CD14-positive monocyte (primary cell): ENCODE measurements at regions of chr17 and their contacts with region 1.

Region 1: DNA sequence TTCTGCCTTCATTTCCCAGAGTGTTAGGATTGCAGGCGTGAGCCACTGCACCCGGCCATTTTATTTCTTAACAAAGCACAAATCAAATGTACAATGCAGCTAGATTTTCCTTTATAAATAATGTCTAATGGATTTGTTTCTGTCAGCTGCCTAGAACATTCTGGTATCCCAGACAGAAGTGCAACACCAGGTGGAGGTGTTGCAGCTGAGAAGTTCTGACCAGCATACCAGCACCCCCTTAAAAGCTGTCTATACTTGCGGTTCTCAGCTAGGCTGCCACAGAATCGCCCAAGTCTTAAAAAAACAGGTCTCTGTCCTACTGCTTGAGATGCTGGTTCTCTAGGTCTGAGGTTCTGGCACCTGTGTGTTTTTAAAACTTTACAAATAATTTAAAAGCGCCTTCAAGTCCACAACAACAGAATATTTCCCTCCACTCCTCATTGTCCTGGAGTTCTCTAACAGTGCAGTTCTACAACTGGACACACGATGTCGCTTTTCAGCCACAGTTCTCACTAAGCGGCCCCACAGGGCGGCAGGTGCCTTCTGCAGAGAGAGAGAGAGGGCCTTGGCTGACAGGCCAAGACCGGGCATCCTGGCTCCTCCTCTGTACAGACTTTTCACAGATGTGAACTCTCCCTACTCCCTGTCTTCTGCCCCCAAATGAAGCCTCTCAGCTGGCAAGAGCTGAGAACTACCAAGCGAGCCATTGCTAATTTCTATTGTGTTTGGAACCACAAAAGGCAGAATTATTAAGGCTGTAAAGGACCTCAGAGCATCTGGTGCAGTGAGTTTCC is 32.6 kb upstream of the MEOX1 start:
- DNase-seq: peak; percentile 60 to 80 (median 72)
- H3K4me3 ChIP-seq: no peak overlapping the region
- H3K4me3 Mint-ChIP-seq: no peak overlapping the region
- H3K27ac ChIP-seq: no peak overlapping the region
- H3K27ac Mint-ChIP-seq: no peak overlapping the region
- H3K4me1 ChIP-seq: peaks cover 3 to 11% of the 10 kb centered on the region in 2 donors
- H3K4me1 Mint-ChIP-seq: peaks cover 7% of the 10 kb centered on the region
- H3K27me3 ChIP-seq: peaks cover 0 to 10% of the 10 kb centered on the region in 2 donors
- H3K27me3 Mint-ChIP-seq: peaks cover 11 to 26% (median 13%) of the 10 kb centered on the region in 3 donors
- CTCF ChIP-seq: peak; percentile 96

Region 2: GRCh38 chr17:43734376-43734775 is 40.1 kb after region 1 on chr17:
- intact Hi-C with region 1: no loop called
- DNase-seq: no peak
- H3K4me3 ChIP-seq: no peak overlapping the region
- H3K4me3 Mint-ChIP-seq: no peak overlapping the region
- H3K27ac ChIP-seq: no peak overlapping the region
- H3K27ac Mint-ChIP-seq: no peak overlapping the region
- H3K4me1 ChIP-seq: no peaks in the 10 kb centered on the region
- H3K4me1 Mint-ChIP-seq: no peaks in the 10 kb centered on the region
- H3K27me3 ChIP-seq: peaks cover 0 to 2% of the 10 kb centered on the region in 2 donors
- H3K27me3 Mint-ChIP-seq: peaks cover 5 to 7% (median 6%) of the 10 kb centered on the region in 3 donors
- CTCF ChIP-seq: no peak

Region 3: GRCh38 chr17:43760254-43760852 is 66.1 kb after region 1 on chr17:
- intact Hi-C with region 1: loop called (anchors 1 to 2 kb)
- DNase-seq: peak; percentile 69 to 82 (median 78)
- H3K4me3 ChIP-seq: no peak overlapping the region
- H3K4me3 Mint-ChIP-seq: no peak overlapping the region
- H3K27ac ChIP-seq: no peak overlapping the region
- H3K27ac Mint-ChIP-seq: peak overlapping the region in 1 of 7 donors; percentile 45
- H3K4me1 ChIP-seq: peaks cover 13 to 17% of the 10 kb centered on the region in 2 donors
- H3K4me1 Mint-ChIP-seq: peaks cover 20% of the 10 kb centered on the region
- H3K27me3 ChIP-seq: peaks cover 9 to 27% of the 10 kb centered on the region in 2 donors
- H3K27me3 Mint-ChIP-seq: peaks cover 21 to 42% (median 26%) of the 10 kb centered on the region in 3 donors
- CTCF ChIP-seq: peak; percentile 96

Region 4: GRCh38 chr17:43846221-43846712 is 152.0 kb after region 1 on chr17:
- intact Hi-C with region 1: loop called in 1 of 2 experiments (anchors 5 kb)
- DNase-seq: peak; percentile 56 to 64 (median 63)
- H3K4me3 ChIP-seq: no peak overlapping the region
- H3K4me3 Mint-ChIP-seq: no peak overlapping the region
- H3K27ac ChIP-seq: no peak overlapping the region
- H3K27ac Mint-ChIP-seq: no peak overlapping the region
- H3K4me1 ChIP-seq: peaks cover 4 to 11% of the 10 kb centered on the region in 2 donors
- H3K4me1 Mint-ChIP-seq: peaks cover 16% of the 10 kb centered on the region
- H3K27me3 ChIP-seq: no peaks in the 10 kb centered on the region
- H3K27me3 Mint-ChIP-seq: peaks cover 3 to 10% (median 4%) of the 10 kb centered on the region in 3 donors
- CTCF ChIP-seq: peak; percentile 99

Region 5: DNA sequence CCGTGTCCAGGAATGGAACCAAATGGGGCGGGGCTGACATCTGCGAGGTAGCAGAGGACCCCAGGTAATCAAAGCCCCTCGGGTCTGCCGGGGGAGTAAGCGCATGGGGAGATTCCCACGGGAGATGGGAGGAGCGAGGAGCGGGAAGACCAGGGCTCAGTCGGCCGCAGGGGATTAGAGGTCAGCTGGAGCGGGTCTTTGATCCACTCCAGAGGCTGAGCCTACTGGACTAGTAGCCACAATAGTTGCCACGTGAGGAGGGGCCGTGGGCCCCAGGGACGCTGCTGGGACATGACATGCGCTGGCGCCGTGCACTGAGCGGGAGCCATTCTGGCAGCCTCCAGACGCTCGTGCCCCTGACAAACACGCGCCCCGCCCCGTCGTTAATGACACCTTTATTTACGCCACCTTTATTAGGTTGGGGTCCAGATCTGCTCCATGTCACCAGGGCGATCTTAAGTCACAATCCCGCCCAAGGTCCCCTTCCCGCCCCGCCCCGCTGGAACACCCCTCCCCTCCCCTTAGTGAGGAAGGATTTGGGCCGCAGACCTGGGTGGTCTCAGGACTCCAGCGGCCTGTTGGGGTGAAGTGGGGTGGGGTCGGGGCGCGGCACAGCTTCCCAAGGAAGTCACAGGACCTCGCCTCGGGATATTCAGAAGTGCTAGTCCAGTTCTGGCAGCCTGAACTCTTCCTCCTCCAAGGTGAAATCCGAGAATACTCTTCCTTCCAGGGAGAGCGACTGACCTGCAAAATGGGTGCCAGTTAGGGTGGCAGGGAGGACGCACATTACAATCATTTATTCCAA is 233.0 kb after region 1 on chr17:
- intact Hi-C with region 1: no loop called
- DNase-seq: no peak
- H3K4me3 ChIP-seq: peak overlapping the region in 1 of 3 experiments; percentile 36
- H3K4me3 Mint-ChIP-seq: peak overlapping the region; percentile 57 to 88
- H3K27ac ChIP-seq: no peak overlapping the region
- H3K27ac Mint-ChIP-seq: no peak overlapping the region
- H3K4me1 ChIP-seq: peaks cover 7 to 15% of the 10 kb centered on the region in 2 donors
- H3K4me1 Mint-ChIP-seq: peaks cover 14% of the 10 kb centered on the region
- H3K27me3 ChIP-seq: peaks cover 25 to 50% of the 10 kb centered on the region in 2 donors
- H3K27me3 Mint-ChIP-seq: peaks cover 37 to 73% (median 47%) of the 10 kb centered on the region in 3 donors
- CTCF ChIP-seq: no peak